A549 (cell line): ENCODE measurements at regions of chr7 and their contacts with region 1.

Region 1: GRCh38 chr7:134690016-134690415 is 43.4 kb downstream of the BPGM start:
- DNase-seq: peak in 1 of 2 experiments; percentile 40
- ATAC-seq: peak; percentile 51 to 68; a peak in 3 of 6 replicates
- H3K4me3 ChIP-seq: no peak overlapping the region
- H3K27ac ChIP-seq: peak overlapping the region in 1 of 2 experiments; percentile 34; a peak in 1 of 6 replicates
- H3K4me1 ChIP-seq: no peaks in the 10 kb centered on the region
- CTCF ChIP-seq: peak; percentile 60
- EP300 ChIP-seq: no peak
- POLR2A ChIP-seq: no peak
- RAD21 ChIP-seq: peak; percentile 66 to 79

Region 2: DNA sequence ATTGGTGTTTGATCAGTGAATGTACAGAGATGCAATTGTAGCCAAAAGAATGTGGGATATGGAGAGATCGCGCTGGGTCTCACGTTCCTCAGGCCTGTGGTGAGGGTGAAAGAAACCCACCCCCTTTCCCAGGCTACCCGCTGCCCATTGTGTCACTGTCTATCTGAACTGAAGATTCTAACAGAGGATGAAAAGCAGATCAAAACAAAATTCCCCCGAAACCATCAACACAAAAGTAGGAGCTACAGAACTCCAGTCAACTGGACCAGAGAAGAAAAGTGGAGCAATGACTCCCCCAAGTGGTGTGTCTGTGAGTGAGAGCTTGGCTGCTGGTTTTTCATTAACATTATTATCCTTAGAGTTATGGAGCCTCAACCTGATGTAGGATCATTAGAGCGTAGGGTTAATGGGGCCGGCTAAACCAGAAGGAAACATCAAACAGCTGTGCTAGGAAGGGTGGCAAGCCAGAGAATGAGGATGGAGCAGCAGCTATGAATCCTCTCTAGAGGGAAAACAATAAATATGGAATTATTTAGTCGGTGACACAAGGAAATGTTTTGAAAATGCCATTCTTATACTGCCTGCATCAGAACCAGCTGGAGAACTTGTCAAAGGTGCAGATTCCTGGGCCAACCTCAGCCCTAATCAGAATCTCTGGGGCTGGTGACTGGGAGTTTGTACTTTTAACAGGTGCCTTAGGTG is 269.4 kb before region 1 on chr7:
- CTCF ChIA-PET with region 1: interaction called, 82 read pairs
- POLR2A ChIA-PET with region 1: no interaction called
- DNase-seq: peak; percentile 88 to 92
- ATAC-seq: peak; percentile 78 to 86
- H3K4me3 ChIP-seq: no peak overlapping the region
- H3K27ac ChIP-seq: peak overlapping the region; percentile 79 to 87
- H3K4me1 ChIP-seq: peaks cover 64% of the 10 kb centered on the region
- CTCF ChIP-seq: peak; percentile 99
- EP300 ChIP-seq: no peak
- POLR2A ChIP-seq: no peak
- RAD21 ChIP-seq: peak; percentile 99 to 100

Region 3: DNA sequence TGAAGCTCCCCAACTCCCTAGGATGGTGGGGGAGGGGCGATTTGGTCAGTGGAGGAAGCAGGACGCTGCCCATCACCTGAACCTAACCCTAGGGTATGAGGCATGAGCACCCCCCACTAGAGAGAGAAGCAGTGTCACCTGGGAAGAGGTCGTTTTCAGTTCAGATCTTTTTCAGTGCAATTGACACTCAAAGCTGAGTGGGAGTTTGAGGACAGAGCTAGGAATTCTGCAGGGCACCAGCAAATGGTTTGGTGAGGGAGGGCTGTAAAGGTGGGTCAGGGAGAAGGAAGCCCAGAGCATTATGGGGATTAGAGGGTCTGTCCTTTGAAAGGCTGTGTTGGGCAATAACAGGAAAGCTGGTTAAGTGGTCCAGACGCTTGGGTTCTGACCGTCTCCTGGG is 32.5 kb before region 1 on chr7:
- CTCF ChIA-PET with region 1: interaction called, 10 read pairs
- POLR2A ChIA-PET with region 1: no interaction called
- DNase-seq: no peak
- ATAC-seq: no peak
- H3K4me3 ChIP-seq: no peak overlapping the region
- H3K27ac ChIP-seq: no peak overlapping the region
- H3K4me1 ChIP-seq: peaks cover 10% of the 10 kb centered on the region; the same call in 1 of the 3 replicates
- CTCF ChIP-seq: no peak
- EP300 ChIP-seq: no peak
- POLR2A ChIP-seq: no peak
- RAD21 ChIP-seq: no peak

Region 4: DNA sequence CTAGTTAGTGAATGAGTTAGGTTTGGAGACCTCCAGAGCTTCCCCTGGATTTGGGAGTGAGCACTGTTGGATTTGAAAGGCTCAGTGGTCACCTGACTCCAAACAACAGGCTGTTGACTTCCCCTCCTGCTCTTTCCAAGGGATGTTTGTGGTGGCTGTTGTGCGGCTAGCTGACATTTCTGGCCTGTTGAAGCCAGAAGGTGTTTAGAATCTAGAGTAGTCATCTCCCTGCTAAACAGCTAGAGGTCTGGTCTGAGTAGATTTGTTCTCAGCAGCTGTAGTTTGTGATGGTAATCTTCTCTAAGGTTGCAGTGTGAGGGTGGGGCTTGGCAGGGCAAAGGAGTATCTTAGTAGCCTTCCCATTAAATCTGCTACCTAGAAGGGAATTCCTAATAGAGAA is 13.3 kb before region 1 on chr7:
- CTCF ChIA-PET with region 1: interaction called, 19 read pairs
- POLR2A ChIA-PET with region 1: no interaction called
- DNase-seq: no peak
- ATAC-seq: no peak
- H3K4me3 ChIP-seq: no peak overlapping the region
- H3K27ac ChIP-seq: no peak overlapping the region
- H3K4me1 ChIP-seq: no peaks in the 10 kb centered on the region
- CTCF ChIP-seq: no peak
- EP300 ChIP-seq: no peak
- POLR2A ChIP-seq: no peak
- RAD21 ChIP-seq: no peak

Region 5: DNA sequence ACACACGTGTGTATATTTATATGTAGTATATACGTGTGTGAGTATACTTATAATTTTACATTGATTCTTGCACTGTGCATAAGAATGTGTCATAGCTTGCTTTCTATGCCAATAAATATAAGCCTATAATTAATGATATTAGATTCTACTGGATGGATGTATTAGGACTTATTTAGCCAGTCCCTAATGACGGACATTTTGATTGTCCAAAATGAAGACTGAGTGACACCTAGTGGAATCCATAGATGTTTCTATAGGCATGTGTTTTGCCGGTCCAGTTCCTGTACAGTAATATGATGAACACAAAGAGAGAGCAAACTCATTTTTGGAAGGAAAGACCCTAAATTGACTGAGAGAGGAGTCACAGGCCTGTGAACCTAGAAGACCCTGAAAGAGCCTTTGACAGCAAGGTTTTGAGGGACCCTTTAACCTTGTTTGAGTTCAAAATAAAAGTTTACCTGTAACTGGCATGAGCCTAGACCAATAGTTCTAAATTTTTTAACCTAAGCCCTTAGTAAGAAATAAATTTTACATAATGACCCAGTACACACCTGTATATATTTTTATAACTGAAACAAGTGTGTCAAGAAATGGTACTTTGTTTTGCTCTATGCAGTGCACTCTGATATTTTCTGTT is 253.9 kb after region 1 on chr7:
- CTCF ChIA-PET with region 1: interaction called, 132 read pairs
- POLR2A ChIA-PET with region 1: no interaction called
- DNase-seq: peak; percentile 44 to 63
- ATAC-seq: peak; percentile 75 to 84; a peak in 5 of 6 replicates
- H3K4me3 ChIP-seq: no peak overlapping the region
- H3K27ac ChIP-seq: no peak overlapping the region
- H3K4me1 ChIP-seq: peaks cover 43% of the 10 kb centered on the region
- CTCF ChIP-seq: peak; percentile 76
- EP300 ChIP-seq: no peak
- POLR2A ChIP-seq: no peak
- RAD21 ChIP-seq: peak; percentile 86 to 87

Region 6: GRCh38 chr7:134986363-134987251 is 296.6 kb after region 1 on chr7 and contains the start of gene AGBL3:
- CTCF ChIA-PET with region 1: interaction called, 17 read pairs
- POLR2A ChIA-PET with region 1: no interaction called
- DNase-seq: peak; percentile 96 to 97
- ATAC-seq: peak; percentile 99
- H3K4me3 ChIP-seq: peak within 1 kb of the TSS; percentile 82
- H3K27ac ChIP-seq: peak within 1 kb of the TSS; percentile 88 to 94
- H3K4me1 ChIP-seq: peaks cover 33% of the 10 kb centered on the region
- CTCF ChIP-seq: peak; percentile 77
- EP300 ChIP-seq: no peak
- POLR2A ChIP-seq: peak; percentile 62
- RAD21 ChIP-seq: peak; percentile 31 to 68; a peak in 4 of 5 replicates
- polyA plus RNA-seq, gene AGBL3: 4.2 and 4.3 TPM in 2 replicates

Region 7: GRCh38 chr7:135274495-135275268 is 584.7 kb after region 1 on chr7:
- CTCF ChIA-PET with region 1: interaction called, 21 read pairs
- POLR2A ChIA-PET with region 1: no interaction called
- DNase-seq: peak; percentile 56 to 80
- ATAC-seq: peak; percentile 79 to 94
- H3K4me3 ChIP-seq: no peak overlapping the region
- H3K27ac ChIP-seq: no peak overlapping the region
- H3K4me1 ChIP-seq: no peaks in the 10 kb centered on the region
- CTCF ChIP-seq: peak; percentile 83
- EP300 ChIP-seq: no peak
- POLR2A ChIP-seq: no peak
- RAD21 ChIP-seq: peak; percentile 86 to 89